Endothelial cell of umbilical vein (primary cell): ENCODE measurements at regions of chr16 and their contacts with region 1.

Region 1: GRCh38 chr16:30984669-30985400 is at the start of gene HSD3B7:
- DNase-seq: peak; percentile 69
- H3K4me3 ChIP-seq: peak within 1 kb of the TSS in 1 of 3 experiments; percentile 19
- H3K27ac ChIP-seq: no peak within 1 kb of the TSS
- H3K4me1 ChIP-seq: no peaks in the 10 kb centered on the region
- H3K27me3 ChIP-seq: no peaks in the 10 kb centered on the region
- CTCF ChIP-seq: peak; percentile 93 to 97
- POLR2A ChIP-seq: no peak
- total RNA-seq, gene HSD3B7: 2.9 and 3.5 TPM in 2 replicates

Region 2: GRCh38 chr16:30740364-30741251 is 244.2 kb before region 1 on chr16:
- CTCF ChIA-PET with region 1: no interaction called
- POLR2A ChIA-PET with region 1: no interaction called
- dilution Hi-C with region 1: no loop called
- intact Hi-C with region 1: no loop called
- DNase-seq: peak; percentile 19
- H3K4me3 ChIP-seq: no peak overlapping the region
- H3K27ac ChIP-seq: peak overlapping the region; percentile 83
- H3K4me1 ChIP-seq: peaks cover 20% of the 10 kb centered on the region
- H3K27me3 ChIP-seq: no peaks in the 10 kb centered on the region
- CTCF ChIP-seq: no peak
- POLR2A ChIP-seq: no peak

Region 3: DNA sequence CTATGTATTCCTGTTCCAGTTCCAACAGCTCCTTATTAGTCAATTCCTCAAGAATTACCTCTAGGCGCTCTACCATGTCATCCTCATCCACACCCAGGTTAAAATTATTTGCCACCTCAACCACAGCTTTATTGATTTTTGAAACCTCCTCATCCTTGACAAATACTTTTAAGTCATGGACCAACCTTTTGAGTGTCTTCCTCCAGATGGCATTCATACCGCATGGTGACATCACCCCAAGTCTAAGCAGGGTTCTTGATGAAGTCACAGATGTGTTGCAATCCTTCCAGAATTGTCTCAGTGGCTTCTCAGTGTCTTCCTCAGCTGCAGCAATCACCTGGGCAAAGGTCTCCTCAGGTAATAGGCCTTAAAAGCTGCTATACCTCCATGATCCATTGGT is 131.1 kb before region 1 on chr16:
- CTCF ChIA-PET with region 1: no interaction called
- POLR2A ChIA-PET with region 1: no interaction called
- dilution Hi-C with region 1: no loop called
- intact Hi-C with region 1: no loop called
- DNase-seq: no peak
- H3K4me3 ChIP-seq: no peak overlapping the region
- H3K27ac ChIP-seq: no peak overlapping the region
- H3K4me1 ChIP-seq: no peaks in the 10 kb centered on the region
- H3K27me3 ChIP-seq: no peaks in the 10 kb centered on the region
- CTCF ChIP-seq: no peak
- POLR2A ChIP-seq: no peak

Region 4: DNA sequence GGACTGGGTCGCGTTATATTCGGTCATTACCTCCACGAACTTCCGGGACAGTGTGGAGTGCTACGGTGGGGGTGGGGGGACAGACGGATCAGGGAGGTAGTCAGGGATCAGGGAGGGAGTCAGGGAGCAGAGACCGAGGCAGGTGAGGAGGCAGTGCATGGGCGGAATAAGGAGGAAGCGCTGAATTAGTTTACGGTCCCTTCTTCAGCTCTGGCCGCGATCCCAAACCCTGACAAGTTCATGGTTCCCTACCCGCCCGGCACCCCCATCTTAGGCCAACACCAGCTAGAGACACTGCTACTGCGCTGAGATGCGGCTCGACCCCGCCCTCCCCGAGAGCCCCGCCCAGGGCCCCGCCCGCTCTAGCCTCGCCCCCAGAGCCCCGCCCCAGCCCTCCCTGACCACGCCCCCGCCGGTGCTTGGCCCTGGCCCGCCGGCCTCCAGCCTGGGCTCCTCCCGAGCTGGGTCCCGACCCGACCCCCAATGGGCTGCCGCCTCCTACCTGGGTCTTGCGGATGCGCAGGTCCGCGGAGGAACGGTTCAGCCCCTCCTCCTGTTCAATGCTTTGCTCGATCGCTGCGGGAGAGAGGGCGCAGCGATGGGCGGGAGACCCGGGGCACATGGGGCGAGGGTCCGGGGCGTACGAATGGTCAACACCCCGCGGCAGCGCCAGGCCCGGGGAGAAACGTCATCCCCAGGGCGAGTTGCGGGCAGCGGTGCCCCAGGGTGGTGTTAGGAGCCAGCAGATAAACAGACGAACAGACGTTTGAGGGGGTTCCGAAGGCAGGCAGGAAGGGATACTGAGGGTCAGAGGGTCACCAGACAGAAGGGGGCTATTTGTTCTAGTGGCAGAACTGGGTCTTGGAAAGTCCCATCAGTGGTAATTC is 12.4 kb after region 1 on chr16:
- CTCF ChIA-PET with region 1: interaction called, 17 read pairs
- POLR2A ChIA-PET with region 1: no interaction called
- dilution Hi-C with region 1: no loop called
- intact Hi-C with region 1: no loop called
- DNase-seq: peak; percentile 37
- H3K4me3 ChIP-seq: peak overlapping the region; percentile 32 to 50 (median 41)
- H3K27ac ChIP-seq: no peak overlapping the region
- H3K4me1 ChIP-seq: no peaks in the 10 kb centered on the region
- H3K27me3 ChIP-seq: no peaks in the 10 kb centered on the region
- CTCF ChIP-seq: no peak
- POLR2A ChIP-seq: no peak

Region 5: DNA sequence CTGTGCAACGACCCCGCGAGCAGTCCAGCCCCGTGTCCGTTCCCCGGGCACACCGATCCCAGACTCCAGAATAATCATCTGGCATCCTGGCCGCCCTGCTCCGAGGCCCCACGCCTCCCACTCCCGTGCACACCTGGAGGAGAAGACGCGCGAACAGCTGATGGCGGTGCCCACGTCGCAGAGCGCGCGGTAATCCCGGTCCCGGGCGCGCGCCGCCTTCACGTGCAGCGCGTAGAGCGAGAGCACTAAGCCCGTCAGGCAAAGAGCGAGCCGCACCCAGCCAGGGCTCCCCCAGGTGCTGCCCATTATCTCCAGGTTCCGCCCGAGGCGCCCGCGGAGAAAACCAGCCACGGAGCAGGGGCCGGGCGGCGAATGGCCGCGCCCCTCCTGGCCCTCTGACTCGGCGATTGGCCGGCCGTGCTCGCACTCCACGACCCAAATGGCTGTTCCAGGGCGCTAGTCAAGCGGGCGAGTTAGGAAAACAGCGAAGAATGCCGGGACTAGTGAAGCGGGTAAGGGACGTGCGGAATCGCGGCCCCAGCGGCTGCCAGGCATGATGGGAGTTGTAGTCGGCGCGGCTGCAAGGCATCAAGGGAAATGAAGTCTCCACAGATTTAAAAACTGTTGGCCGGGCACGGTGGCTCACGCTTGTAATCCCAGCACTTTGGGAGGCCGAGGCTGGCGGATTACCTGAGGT is 109.7 kb after region 1 on chr16 and contains the start of gene VKORC1:
- CTCF ChIA-PET with region 1: interaction called, 66 read pairs
- POLR2A ChIA-PET with region 1: no interaction called
- dilution Hi-C with region 1: no loop called
- intact Hi-C with region 1: loop called (anchors 1 kb)
- DNase-seq: peak; percentile 97
- H3K4me3 ChIP-seq: peak within 1 kb of the TSS; percentile 28 to 91 (median 62)
- H3K27ac ChIP-seq: peak within 1 kb of the TSS; percentile 6
- H3K4me1 ChIP-seq: peaks cover 3% of the 10 kb centered on the region
- H3K27me3 ChIP-seq: no peaks in the 10 kb centered on the region
- CTCF ChIP-seq: no peak
- POLR2A ChIP-seq: peak; percentile 64
- total RNA-seq, gene VKORC1: 91.8 and 93.5 TPM in 2 replicates

Region 6: GRCh38 chr16:31117391-31118197 is 132.8 kb after region 1 on chr16 and contains the start of gene KAT8:
- CTCF ChIA-PET with region 1: interaction called, 12 read pairs
- POLR2A ChIA-PET with region 1: no interaction called
- dilution Hi-C with region 1: no loop called
- intact Hi-C with region 1: no loop called
- DNase-seq: peak; percentile 98
- H3K4me3 ChIP-seq: peak within 1 kb of the TSS; percentile 54 to 79 (median 79)
- H3K27ac ChIP-seq: peak within 1 kb of the TSS; percentile 77
- H3K4me1 ChIP-seq: peaks cover 7% of the 10 kb centered on the region
- H3K27me3 ChIP-seq: no peaks in the 10 kb centered on the region
- CTCF ChIP-seq: no peak
- POLR2A ChIP-seq: peak; percentile 84
- total RNA-seq, gene KAT8: 42.1 and 42.8 TPM in 2 replicates

Region 7: GRCh38 chr16:31382485-31383161 is 397.8 kb after region 1 on chr16:
- CTCF ChIA-PET with region 1: interaction called, 12 read pairs
- POLR2A ChIA-PET with region 1: no interaction called
- dilution Hi-C with region 1: no loop called
- intact Hi-C with region 1: no loop called
- DNase-seq: peak; percentile 35
- H3K4me3 ChIP-seq: no peak overlapping the region
- H3K27ac ChIP-seq: no peak overlapping the region
- H3K4me1 ChIP-seq: no peaks in the 10 kb centered on the region
- H3K27me3 ChIP-seq: no peaks in the 10 kb centered on the region
- CTCF ChIP-seq: peak; percentile 54 to 80
- POLR2A ChIP-seq: no peak

Region 8: DNA sequence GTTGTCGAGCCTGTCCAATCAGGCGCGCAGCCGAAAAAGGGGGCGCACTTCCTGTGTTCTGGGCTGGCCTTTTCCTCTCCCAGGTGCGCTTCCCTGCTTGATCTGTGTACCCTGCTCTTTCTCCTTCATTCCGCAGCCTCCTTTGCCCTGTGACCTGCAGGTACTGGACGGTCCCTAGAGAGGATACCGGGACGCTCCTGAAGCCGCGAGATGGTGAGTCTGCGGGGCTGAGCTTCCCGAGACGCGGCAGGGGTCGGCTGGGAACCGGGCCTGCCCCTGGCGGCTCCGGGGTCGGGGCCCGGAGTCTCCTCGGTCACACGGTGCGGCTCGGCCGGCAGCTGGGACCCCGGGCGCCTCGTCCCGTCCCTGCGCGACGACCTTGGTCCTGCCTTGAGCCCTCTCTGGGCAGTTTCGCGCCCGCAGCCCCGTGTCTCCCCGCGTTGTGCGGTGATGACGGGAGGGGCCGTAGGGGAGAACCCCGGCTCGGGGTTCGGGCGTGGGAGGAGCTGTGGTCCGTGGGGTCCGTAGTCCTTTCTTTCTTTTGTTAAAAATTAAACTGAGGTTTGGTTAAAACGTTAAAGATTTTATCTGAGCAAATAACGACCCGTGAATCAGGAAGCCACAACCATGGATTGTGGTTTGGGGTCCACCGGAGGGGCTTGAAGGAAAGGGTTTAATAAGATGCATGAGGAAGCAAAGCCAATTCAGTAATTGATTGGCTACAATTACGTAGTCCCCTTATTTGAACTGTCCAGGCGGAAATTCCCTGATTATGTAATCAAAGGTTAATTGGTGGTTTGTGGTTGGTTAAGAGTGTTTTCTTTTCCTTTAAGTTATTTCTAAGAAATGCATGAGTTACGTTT is 715.9 kb after region 1 on chr16:
- CTCF ChIA-PET with region 1: no interaction called
- POLR2A ChIA-PET with region 1: no interaction called
- dilution Hi-C with region 1: no loop called
- intact Hi-C with region 1: loop called (anchors 10 kb)
- DNase-seq: no peak
- H3K4me3 ChIP-seq: peak overlapping the region in 2 of 3 experiments; percentile 1 to 33
- H3K27ac ChIP-seq: no peak overlapping the region
- H3K4me1 ChIP-seq: no peaks in the 10 kb centered on the region
- H3K27me3 ChIP-seq: peaks cover 11% of the 10 kb centered on the region in 2 experiments
- CTCF ChIP-seq: no peak
- POLR2A ChIP-seq: no peak